ENCODE measurements at regions of chr4 and their contacts with region 1.

Region 1: DNA sequence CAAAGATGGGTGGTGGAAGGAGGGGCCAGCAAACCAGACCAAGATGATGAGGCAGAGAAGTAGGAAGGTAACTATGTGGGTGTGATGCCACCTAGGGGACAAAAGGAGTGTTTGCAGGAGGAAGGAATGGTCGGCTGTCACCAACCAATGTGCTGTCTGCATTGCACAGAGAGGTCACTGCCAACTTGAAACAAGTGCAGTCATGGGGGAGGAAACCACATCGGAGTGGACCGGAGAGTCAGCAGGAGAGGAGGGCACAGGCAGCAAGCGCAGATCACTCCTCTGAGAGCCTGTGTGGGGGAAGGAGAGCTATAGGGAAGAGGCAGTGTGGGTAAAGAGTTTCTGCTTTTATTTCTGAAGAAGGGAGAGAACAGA is 38.5 kb upstream of the FGFBP2 start:
- DNase-seq: peak; percentile 89
- H3K4me3 ChIP-seq: no peak overlapping the region
- H3K27ac ChIP-seq: no peak overlapping the region
- H3K4me1 ChIP-seq: peaks cover 0 to 11% (median 6%) of the 10 kb centered on the region in 4 donors
- H3K27me3 ChIP-seq: no peaks in the 10 kb centered on the region
- CTCF ChIP-seq: peak; percentile 74 to 87 (median 80)
- EP300 ChIP-seq: no peak
- POLR2A ChIP-seq: no peak

Region 2: DNA sequence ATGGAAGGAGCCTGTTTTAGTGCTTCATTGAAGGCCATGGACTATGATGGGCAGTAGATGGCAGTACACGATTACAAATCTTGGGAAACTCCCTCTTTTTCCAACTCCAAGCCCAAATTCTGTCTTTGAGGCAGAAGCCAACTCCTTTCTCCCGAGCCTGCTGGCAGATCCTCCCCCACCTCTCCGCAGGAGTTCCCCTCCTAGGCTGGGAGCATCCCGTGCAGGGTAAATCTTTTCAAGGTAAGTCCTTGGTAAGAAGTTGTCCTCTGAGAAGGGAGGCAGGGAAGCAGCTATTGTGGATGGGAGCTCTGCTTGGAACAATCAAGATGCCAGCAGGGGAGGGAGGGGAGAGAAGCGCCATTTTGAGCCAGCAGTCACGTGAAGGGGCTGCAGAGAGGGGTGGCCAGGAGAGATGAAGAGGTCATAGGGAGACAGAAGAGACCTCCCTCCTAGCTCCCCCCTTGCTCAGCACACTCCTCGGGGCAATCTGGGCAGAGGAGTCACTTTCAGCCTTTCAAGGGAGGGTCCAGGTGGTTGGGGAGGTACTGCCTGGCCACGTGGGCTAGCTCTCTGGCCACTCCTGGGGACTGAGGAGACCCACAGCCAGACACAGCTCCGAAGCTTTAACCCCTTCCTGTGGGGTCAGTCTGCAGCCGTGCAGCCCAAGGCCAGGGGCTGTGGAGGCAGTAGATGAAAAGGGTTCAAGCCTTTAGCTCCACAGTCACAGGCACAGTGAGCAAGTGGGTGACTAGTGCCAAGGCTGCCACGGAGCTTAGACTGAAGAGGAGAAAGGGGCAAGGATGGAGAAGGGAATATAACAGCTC is 522.2 kb before region 1 on chr4:
- intact Hi-C with region 1: loop called (anchors 5 kb)
- DNase-seq: peak; percentile 78
- H3K4me3 ChIP-seq: peak overlapping the region; percentile 31 to 49 (median 40)
- H3K27ac ChIP-seq: peak overlapping the region; percentile 75 to 88 (median 82)
- H3K4me1 ChIP-seq: peaks cover 0 to 22% (median 19%) of the 10 kb centered on the region in 4 donors
- H3K27me3 ChIP-seq: no peaks in the 10 kb centered on the region
- CTCF ChIP-seq: peak; percentile 38 to 60 (median 45)
- EP300 ChIP-seq: no peak
- POLR2A ChIP-seq: no peak

Region 3: GRCh38 chr4:15714646-15715435 is 286.6 kb before region 1 on chr4:
- intact Hi-C with region 1: loop called (anchors 5 kb)
- DNase-seq: no peak
- H3K4me3 ChIP-seq: no peak overlapping the region
- H3K27ac ChIP-seq: peak overlapping the region in 1 of 4 donors; percentile 7
- H3K4me1 ChIP-seq: peaks cover 0 to 48% (median 41%) of the 10 kb centered on the region in 4 donors
- H3K27me3 ChIP-seq: no peaks in the 10 kb centered on the region
- CTCF ChIP-seq: no peak
- EP300 ChIP-seq: no peak
- POLR2A ChIP-seq: no peak

Region 4: DNA sequence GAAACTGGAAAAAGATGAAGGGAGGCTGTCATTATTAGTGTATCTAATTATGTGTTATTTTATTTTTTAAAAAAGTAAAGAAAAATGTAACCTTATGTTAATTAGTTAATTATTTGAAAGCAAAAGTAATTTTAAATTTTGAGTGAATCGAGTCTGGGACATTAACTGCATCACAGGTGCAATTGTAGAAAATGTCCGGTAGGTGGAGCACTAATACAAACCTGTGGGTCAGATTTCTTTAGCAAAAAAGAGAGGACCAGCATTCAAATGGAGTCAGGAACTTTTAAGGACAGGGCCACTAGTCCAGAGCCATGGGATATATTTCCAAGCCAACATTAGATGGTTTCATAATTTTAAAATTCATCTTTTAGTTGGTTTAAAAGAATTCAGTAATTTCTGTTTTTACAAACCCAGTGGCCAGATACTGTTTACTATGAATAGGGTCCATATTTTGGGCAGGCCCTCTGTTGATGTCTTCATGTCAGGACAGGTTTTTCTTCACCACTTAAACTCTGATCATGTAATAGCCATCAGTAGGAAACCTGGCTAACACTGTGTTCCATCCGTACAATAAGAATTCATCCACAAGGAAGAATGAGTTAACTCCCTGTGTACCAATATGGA is 271.4 kb before region 1 on chr4:
- intact Hi-C with region 1: loop called (anchors 5 kb)
- DNase-seq: no peak
- H3K4me3 ChIP-seq: no peak overlapping the region
- H3K27ac ChIP-seq: no peak overlapping the region
- H3K4me1 ChIP-seq: peaks cover 0 to 7% (median 7%) of the 10 kb centered on the region in 4 donors
- H3K27me3 ChIP-seq: no peaks in the 10 kb centered on the region
- CTCF ChIP-seq: peak; percentile 60 to 85 (median 70)
- EP300 ChIP-seq: no peak
- POLR2A ChIP-seq: no peak

Region 5: DNA sequence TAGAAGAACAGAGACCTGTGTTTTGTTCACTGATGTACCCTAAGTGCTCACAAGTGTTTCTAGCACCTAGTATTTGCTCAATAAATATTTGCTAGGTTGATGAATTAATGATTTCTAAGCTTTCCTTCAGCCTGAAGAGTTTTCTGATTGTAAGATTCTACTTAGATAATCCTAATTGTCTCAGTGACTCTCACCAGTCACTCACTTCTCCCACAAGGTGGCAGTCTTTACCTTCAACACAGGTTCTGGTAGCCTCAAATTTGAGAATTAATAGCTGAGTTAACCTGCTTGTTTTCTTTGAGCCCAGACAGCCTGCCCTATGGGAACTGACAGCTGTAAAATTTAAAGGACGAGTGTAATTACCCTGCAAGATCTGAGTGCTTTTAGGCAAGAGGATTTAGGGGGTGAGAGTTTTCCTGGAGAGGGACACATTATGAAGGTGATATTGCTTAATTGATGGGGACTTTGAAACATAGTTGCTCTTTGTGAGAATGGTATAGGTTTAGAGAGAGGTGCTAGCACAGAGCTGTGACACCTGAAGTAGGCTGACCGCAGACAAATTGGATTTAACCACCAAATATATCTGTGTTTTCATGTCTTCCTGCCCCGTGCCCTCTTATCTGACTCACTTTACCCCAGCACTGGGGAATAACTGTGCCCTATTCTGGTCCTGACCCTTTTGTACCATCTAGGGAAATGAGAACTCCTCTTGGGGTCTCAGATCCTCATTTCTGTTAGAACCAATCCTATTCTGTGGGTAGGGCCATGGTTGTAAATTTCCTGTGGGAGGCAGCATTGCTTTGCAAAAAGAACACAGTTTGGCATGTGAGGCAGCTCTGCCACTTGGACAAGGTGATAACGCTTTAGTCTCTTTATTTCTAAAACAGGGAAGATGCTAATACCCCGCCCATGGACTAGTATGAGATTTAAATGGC is 195.6 kb before region 1 on chr4:
- intact Hi-C with region 1: loop called (anchors 5 kb)
- DNase-seq: no peak
- H3K4me3 ChIP-seq: no peak overlapping the region
- H3K27ac ChIP-seq: no peak overlapping the region
- H3K4me1 ChIP-seq: no peaks in the 10 kb centered on the region
- H3K27me3 ChIP-seq: no peaks in the 10 kb centered on the region
- CTCF ChIP-seq: peak in 3 of 4 experiments; percentile 41 to 60 (median 41)
- EP300 ChIP-seq: no peak
- POLR2A ChIP-seq: no peak

Region 6: GRCh38 chr4:15882675-15883086 is 118.8 kb before region 1 on chr4:
- intact Hi-C with region 1: loop called (anchors 1 kb)
- DNase-seq: peak; percentile 69
- H3K4me3 ChIP-seq: no peak overlapping the region
- H3K27ac ChIP-seq: no peak overlapping the region
- H3K4me1 ChIP-seq: peaks cover 0 to 4% (median 0%) of the 10 kb centered on the region in 4 donors
- H3K27me3 ChIP-seq: no peaks in the 10 kb centered on the region
- CTCF ChIP-seq: peak; percentile 27 to 93 (median 86)
- EP300 ChIP-seq: no peak
- POLR2A ChIP-seq: no peak

Region 7: GRCh38 chr4:15963001-15963451 is 38.4 kb before region 1 on chr4 and contains the start of gene FGFBP2:
- intact Hi-C with region 1: loop called (anchors 2 kb)
- DNase-seq: peak; percentile 71
- H3K4me3 ChIP-seq: no peak within 1 kb of the TSS
- H3K27ac ChIP-seq: no peak within 1 kb of the TSS
- H3K4me1 ChIP-seq: peaks cover 0 to 6% (median 0%) of the 10 kb centered on the region in 4 donors
- H3K27me3 ChIP-seq: no peaks in the 10 kb centered on the region
- CTCF ChIP-seq: peak in 3 of 4 experiments; percentile 23 to 37 (median 31)
- EP300 ChIP-seq: no peak
- POLR2A ChIP-seq: no peak
- total RNA-seq, gene FGFBP2: 3.8 to 17.1 (median 7.6) TPM